Activated CD4-positive, alpha-beta T cell treated with anti-CD3 and anti-CD28 coated beads for 36 hours (primary cell): ENCODE measurements at regions of chr7 and their contacts with region 1.

Region 1: DNA sequence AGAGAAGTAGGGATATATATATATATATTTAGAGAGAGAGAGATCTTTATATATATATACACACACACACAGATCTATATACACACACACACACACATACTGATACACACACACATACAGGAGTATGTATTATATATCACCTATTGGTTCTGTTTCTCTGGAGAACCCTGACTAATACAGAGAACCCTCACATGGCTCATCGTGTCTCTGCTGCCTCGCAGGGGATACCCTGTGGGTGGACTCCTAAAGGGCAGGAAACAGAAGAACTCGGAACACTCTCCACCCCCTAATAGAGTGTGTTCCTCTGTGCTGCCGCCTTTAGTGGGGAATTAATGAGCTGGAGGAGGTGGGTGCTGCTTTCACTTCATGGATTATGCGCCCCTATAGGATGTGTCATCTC is 86.6 kb downstream of the NPY start:
- DNase-seq: peak; percentile 8
- ATAC-seq: peak; percentile 23
- H3K4me3 Mint-ChIP-seq: no peak overlapping the region
- H3K27ac Mint-ChIP-seq: no peak overlapping the region
- H3K4me1 Mint-ChIP-seq: no peaks in the 10 kb centered on the region
- H3K27me3 Mint-ChIP-seq: peaks cover 4% of the 10 kb centered on the region

Region 2: DNA sequence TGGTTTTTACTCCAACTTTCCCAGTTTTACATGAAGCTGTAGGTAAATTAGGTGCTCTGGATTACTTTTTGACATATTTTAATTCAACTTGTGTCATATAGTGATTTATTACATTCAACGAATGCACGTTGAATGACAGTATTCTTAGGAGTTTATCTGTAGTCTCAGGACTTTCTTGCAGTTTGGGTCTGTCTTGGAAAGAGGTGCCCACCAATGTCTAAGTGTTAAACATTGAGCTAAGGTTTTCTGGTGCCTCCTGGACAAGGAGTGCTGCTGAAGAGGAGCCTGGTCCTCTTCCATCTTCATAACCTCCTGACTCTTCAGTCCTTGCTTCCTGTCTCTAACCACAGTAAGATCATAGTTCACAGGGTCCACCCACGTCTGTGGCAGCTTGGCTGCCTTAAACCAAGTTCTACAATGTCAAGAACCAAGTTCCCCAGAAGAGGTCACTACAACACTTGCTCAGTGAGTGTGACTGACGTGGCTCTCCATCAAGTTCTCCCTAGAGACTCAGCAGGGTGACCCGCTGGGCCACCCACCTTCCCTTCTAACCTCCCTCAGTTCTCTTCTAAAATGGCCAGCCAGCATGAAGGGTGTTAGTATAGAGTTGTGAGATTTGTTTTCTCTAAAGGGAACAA is 80.4 kb before region 1 on chr7:
- CTCF ChIA-PET with region 1: no interaction called
- POLR2A ChIA-PET with region 1: no interaction called
- intact Hi-C with region 1: no loop called
- DNase-seq: peak; percentile 81
- ATAC-seq: peak; percentile 99
- H3K4me3 Mint-ChIP-seq: no peak overlapping the region
- H3K27ac Mint-ChIP-seq: no peak overlapping the region
- H3K4me1 Mint-ChIP-seq: peaks cover 10% of the 10 kb centered on the region
- H3K27me3 Mint-ChIP-seq: peaks cover 32% of the 10 kb centered on the region

Region 3: DNA sequence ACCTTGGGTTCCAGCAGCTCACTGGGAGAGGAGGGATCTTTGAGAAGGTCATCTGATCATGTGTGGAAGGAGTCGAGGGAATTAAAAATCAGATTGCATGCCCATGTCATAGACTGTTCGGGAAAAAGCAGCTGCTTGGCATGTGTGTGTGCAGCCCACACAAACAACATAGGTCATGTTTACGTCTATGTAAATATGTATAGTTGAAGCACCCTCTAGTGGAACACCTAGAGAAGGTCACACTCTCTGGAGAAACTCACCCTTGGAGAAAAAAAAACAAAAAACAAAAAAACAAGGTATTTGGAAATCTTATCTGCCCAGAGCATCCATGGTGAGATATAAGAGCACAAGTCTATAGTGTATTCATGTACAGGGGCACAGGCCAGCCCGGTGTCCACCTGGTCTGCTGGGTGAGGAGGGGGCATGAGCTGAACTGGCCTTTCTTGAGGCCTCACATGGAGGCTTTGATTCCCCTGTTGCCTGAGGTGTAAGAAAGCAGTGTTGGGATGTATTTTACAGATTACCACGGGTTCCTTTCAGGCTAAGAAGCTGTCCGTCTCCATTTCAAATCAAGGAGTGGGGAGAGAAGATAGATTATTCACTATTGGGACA is 11.5 kb after region 1 on chr7:
- CTCF ChIA-PET with region 1: interaction called, 10 read pairs
- POLR2A ChIA-PET with region 1: no interaction called
- intact Hi-C with region 1: no loop called
- DNase-seq: no peak
- ATAC-seq: peak; percentile 39
- H3K4me3 Mint-ChIP-seq: no peak overlapping the region
- H3K27ac Mint-ChIP-seq: no peak overlapping the region
- H3K4me1 Mint-ChIP-seq: no peaks in the 10 kb centered on the region
- H3K27me3 Mint-ChIP-seq: peaks cover 4% of the 10 kb centered on the region